ENCODE measurements at regions of chr2 and their contacts with region 1.

Region 1: GRCh38 chr2:239298116-239298804 is 102.6 kb downstream of the HDAC4 start:
- DNase-seq: peak; percentile 76
- H3K4me3 Mint-ChIP-seq: peak overlapping the region; percentile 81
- H3K27ac Mint-ChIP-seq: peak overlapping the region; percentile 81
- H3K4me1 Mint-ChIP-seq: peaks cover 65% of the 10 kb centered on the region
- H3K27me3 Mint-ChIP-seq: no peaks in the 10 kb centered on the region

Region 2: GRCh38 chr2:239275044-239275685 is 23.1 kb before region 1 on chr2:
- intact Hi-C with region 1: loop called (anchors 1 kb)
- DNase-seq: peak; percentile 81
- H3K4me3 Mint-ChIP-seq: peak overlapping the region; percentile 58
- H3K27ac Mint-ChIP-seq: peak overlapping the region; percentile 86
- H3K4me1 Mint-ChIP-seq: peaks cover 69% of the 10 kb centered on the region
- H3K27me3 Mint-ChIP-seq: peaks cover 2% of the 10 kb centered on the region

Region 3: GRCh38 chr2:239318790-239319661 is 20.8 kb after region 1 on chr2:
- intact Hi-C with region 1: loop called (anchors 1 kb)
- DNase-seq: no peak
- H3K4me3 Mint-ChIP-seq: peak overlapping the region; percentile 81
- H3K27ac Mint-ChIP-seq: peak overlapping the region; percentile 86
- H3K4me1 Mint-ChIP-seq: peaks cover 70% of the 10 kb centered on the region
- H3K27me3 Mint-ChIP-seq: no peaks in the 10 kb centered on the region

Region 4: GRCh38 chr2:239326831-239327535 is 28.7 kb after region 1 on chr2:
- intact Hi-C with region 1: loop called (anchors 1 kb)
- DNase-seq: peak; percentile 71
- H3K4me3 Mint-ChIP-seq: peak overlapping the region; percentile 40
- H3K27ac Mint-ChIP-seq: peak overlapping the region; percentile 90
- H3K4me1 Mint-ChIP-seq: peaks cover 73% of the 10 kb centered on the region
- H3K27me3 Mint-ChIP-seq: no peaks in the 10 kb centered on the region

Region 5: DNA sequence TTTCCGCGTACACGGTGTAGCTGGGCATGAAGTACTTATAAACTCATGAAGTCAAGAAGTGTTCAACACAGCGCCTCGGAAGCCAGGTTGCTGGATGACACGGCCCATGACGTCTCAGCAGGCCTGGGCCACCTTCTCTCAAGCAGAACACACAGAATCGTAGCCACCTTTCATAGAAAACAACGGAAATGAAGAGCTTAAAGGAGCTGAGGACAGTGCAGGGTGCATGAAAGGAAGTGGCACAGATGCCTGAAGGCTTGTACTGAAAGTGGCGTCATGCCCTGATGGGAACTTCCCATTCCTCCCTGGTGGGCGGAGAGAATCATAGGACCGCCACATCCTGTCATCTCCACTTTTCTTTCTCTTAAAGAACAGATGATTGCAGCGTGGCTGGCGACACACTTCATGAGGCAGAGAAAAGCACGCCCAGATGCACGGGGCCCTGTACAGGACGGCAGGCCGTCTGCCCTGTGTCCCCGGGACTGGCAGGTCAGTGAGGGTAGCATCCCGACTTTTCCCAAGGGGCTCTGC is 71.4 kb after region 1 on chr2:
- intact Hi-C with region 1: loop called (anchors 2 kb)
- DNase-seq: peak; percentile 72
- H3K4me3 Mint-ChIP-seq: peak overlapping the region; percentile 78
- H3K27ac Mint-ChIP-seq: peak overlapping the region; percentile 95
- H3K4me1 Mint-ChIP-seq: peaks cover 11% of the 10 kb centered on the region
- H3K27me3 Mint-ChIP-seq: no peaks in the 10 kb centered on the region